ENCODE measurements at regions of chr11 and their contacts with region 1.

Region 1: GRCh38 chr11:125345421-125346178 is 150.5 kb downstream of the FEZ1 start:
- DNase-seq: peak; percentile 76

Region 2: DNA sequence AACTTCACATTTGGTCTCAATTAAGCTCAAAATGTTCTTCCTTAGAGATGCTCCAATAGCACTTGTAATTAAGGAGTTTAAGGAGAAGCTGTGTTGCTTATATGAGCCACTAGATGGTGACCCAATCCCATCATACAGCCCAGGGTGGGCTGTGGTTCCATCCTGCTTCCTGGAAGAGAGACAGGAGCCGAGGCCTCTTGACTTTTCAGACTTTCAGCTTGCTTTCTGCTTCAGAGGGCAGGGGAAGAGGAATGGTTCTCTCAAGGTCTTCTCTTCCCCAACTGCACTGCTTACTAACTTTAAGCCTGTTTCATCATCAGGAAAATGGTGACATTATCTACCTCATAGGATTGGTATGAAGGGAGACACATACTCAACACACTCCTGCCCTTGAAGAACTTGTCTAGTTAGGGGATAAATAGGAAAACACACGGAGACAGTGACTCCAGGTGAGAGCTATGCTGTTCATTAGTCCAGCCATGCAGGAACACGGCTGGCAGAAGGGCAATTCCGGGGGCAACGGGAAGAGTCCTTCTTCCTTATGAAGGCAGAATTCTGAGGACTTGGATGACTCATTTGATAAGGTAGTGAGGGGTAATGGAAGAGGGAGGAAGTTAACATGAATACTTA is 254.2 kb before region 1 on chr11:
- CTCF ChIA-PET with region 1: interaction called, 11 read pairs
- POLR2A ChIA-PET with region 1: no interaction called
- DNase-seq: peak; percentile 81

Region 3: GRCh38 chr11:125165843-125166763 is 179.5 kb before region 1 on chr11:
- CTCF ChIA-PET with region 1: interaction called, 18 read pairs
- POLR2A ChIA-PET with region 1: interaction called, 3 read pairs
- DNase-seq: no peak

Region 4: DNA sequence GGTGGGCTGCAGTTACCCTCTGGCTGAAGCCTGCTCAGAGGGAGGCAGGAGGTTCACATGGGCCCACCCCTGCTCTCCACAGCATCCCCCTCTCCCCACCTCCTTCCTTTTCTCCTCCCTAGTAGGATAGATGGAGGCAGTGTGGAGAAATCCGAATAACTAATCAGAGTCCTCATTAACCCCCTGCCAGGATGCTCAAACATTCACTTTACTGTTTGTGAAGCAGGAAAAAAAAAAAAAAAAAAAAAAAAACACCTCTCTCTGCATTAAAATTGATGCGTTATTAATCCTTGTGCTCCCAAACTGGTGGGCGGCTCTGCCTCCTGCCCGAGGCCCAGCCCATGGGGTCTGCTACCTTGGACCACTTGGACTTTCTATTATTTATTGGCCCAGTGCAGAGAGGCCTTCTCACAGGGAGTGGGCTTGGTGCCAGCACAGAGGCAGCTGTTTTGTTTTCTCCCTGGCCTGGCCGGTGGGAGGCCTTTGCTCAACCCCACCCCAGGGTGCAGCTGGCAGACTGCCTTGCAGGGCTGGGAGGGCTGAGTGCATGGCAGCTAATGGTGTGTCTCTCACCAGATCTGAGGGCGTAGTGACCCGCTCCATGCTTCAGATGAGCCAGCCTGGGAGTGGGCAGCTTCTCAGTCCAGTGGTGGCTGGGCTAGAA is 30.4 kb before region 1 on chr11:
- CTCF ChIA-PET with region 1: no interaction called
- POLR2A ChIA-PET with region 1: no interaction called
- DNase-seq: no peak

Region 5: GRCh38 chr11:125327518-125328224 is 17.9 kb before region 1 on chr11:
- CTCF ChIA-PET with region 1: interaction called, 12 read pairs
- POLR2A ChIA-PET with region 1: no interaction called
- DNase-seq: no peak

Region 6: DNA sequence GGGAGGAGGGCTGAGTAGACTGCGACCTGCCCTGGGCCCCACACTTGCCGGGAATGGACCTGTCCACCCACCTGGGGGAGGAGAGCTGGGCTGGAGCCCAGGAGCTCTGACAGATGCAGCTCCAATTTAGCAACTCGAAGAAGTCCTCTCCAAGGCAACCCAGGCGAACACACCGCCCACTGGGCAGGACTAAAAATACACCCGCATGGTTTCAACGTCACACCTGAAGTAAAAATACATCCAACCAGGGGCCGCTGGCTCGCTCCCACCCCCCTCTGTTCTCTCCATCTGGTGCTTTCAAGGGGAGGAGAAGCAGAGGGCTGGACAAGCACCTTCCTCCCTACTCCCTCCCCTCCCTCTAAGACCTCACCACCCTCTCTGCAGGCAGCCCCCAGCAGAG is 30.5 kb after region 1 on chr11:
- CTCF ChIA-PET with region 1: no interaction called
- POLR2A ChIA-PET with region 1: no interaction called
- DNase-seq: no peak

Measured in HEK293T (cell line).